MCF 10A (cell line): ENCODE measurements at regions of chr6 and their contacts with region 1.

Region 1: GRCh38 chr6:144265390-144265789 is 19.7 kb upstream of the UTRN start:
- DNase-seq: peak; percentile 84
- H3K4me3 Mint-ChIP-seq: peak overlapping the region; percentile 56
- H3K27ac Mint-ChIP-seq: peak overlapping the region; percentile 85
- H3K4me1 Mint-ChIP-seq: peaks cover 22% of the 10 kb centered on the region
- H3K27me3 Mint-ChIP-seq: no peaks in the 10 kb centered on the region
- CTCF ChIP-seq: no peak

Region 2: GRCh38 chr6:143965503-143966171 is 299.8 kb before region 1 on chr6:
- CTCF ChIA-PET with region 1: no interaction called
- POLR2A ChIA-PET with region 1: no interaction called
- intact Hi-C with region 1: no loop called
- DNase-seq: peak; percentile 53
- H3K4me3 Mint-ChIP-seq: no peak overlapping the region
- H3K27ac Mint-ChIP-seq: no peak overlapping the region
- H3K4me1 Mint-ChIP-seq: peaks cover 9% of the 10 kb centered on the region
- H3K27me3 Mint-ChIP-seq: no peaks in the 10 kb centered on the region
- CTCF ChIP-seq: no peak

Region 3: GRCh38 chr6:144036064-144036834 is 229.1 kb before region 1 on chr6:
- CTCF ChIA-PET with region 1: no interaction called
- POLR2A ChIA-PET with region 1: no interaction called
- intact Hi-C with region 1: no loop called
- DNase-seq: peak; percentile 12
- H3K4me3 Mint-ChIP-seq: peak overlapping the region; percentile 58
- H3K27ac Mint-ChIP-seq: no peak overlapping the region
- H3K4me1 Mint-ChIP-seq: peaks cover 4% of the 10 kb centered on the region
- H3K27me3 Mint-ChIP-seq: no peaks in the 10 kb centered on the region
- CTCF ChIP-seq: no peak

Region 4: DNA sequence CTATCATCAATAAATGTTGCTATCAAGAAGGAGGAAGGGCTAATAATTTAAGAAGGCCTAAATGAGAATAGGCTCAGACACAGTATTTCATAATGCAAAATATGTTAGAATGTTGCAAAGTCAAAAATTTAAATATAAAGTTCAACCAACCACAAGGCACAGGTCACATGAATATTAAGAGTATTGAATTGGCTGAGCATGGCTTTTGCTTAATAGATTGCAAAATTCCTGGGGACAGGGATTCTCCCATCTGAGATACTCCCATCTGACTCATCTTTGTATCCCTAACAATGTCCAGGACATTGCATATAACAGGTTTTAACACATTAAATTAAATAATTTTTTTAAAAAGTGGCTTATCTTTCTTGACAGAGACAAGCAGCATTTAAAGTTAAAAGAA is 13.1 kb before region 1 on chr6:
- CTCF ChIA-PET with region 1: interaction called, 3 read pairs
- POLR2A ChIA-PET with region 1: interaction called, 13 read pairs
- intact Hi-C with region 1: no loop called
- DNase-seq: peak; percentile 45
- H3K4me3 Mint-ChIP-seq: no peak overlapping the region
- H3K27ac Mint-ChIP-seq: no peak overlapping the region
- H3K4me1 Mint-ChIP-seq: no peaks in the 10 kb centered on the region
- H3K27me3 Mint-ChIP-seq: no peaks in the 10 kb centered on the region
- CTCF ChIP-seq: no peak

Region 5: GRCh38 chr6:144278659-144279314 is 13.4 kb after region 1 on chr6:
- CTCF ChIA-PET with region 1: interaction called, 5 read pairs
- POLR2A ChIA-PET with region 1: interaction called, 37 read pairs
- intact Hi-C with region 1: loop called (anchors 1 kb)
- DNase-seq: peak; percentile 88
- H3K4me3 Mint-ChIP-seq: no peak overlapping the region
- H3K27ac Mint-ChIP-seq: peak overlapping the region; percentile 16
- H3K4me1 Mint-ChIP-seq: peaks cover 12% of the 10 kb centered on the region
- H3K27me3 Mint-ChIP-seq: no peaks in the 10 kb centered on the region
- CTCF ChIP-seq: no peak

Region 6: DNA sequence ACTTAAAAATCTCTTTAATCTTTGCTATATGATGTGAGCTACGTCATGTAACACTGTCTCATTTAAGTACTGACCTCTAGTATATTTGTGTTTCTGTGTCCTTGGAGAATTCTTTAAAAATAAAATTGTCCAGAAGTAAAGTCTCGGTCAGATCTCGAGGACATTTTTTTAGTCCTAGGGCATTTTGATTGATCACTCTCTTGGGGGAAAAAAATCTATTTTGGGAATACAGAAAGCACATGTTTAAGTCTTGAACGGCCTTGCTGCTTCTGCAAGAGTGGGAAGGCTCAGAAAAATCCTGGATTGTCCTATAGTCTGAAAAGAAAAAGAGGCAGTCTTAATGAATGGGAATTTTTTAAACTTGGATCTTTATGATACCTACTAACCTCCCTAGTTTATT is 254.0 kb after region 1 on chr6:
- CTCF ChIA-PET with region 1: no interaction called
- POLR2A ChIA-PET with region 1: no interaction called
- intact Hi-C with region 1: no loop called
- DNase-seq: no peak
- H3K4me3 Mint-ChIP-seq: no peak overlapping the region
- H3K27ac Mint-ChIP-seq: no peak overlapping the region
- H3K4me1 Mint-ChIP-seq: no peaks in the 10 kb centered on the region
- H3K27me3 Mint-ChIP-seq: no peaks in the 10 kb centered on the region
- CTCF ChIP-seq: no peak